GM18951 (cell line): ENCODE measurements at regions of chr6 and their contacts with region 1.

Region 1: DNA sequence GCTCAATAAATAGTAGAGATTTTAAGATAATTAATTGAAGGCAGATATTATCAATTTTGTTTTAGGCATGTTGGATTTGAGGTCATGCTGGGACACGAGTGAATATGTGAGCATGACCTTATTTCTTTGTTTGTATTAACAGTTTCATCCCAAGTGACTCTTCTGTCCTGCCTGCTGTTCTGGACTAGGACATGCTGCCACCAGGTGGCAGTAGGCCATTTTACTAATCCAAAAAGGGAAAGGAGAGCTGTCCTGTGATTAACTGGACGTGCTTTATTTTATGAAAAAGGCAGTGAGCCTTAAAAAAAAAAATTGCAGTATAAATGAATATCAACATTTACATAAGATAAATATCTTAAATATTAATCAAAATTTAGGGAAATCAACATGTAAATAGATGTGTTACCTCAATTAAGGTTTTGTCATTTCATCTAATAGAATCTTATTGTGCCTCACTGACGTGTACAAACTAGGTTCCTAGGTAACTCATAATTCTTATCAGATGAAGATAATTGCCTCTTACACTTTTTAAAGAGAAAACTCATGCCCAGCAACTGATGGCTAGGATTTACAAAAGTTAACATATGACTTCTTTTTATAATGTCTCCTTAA is 49.8 kb downstream of the FRK start:
- POLR2A ChIP-seq: no peak

Region 2: DNA sequence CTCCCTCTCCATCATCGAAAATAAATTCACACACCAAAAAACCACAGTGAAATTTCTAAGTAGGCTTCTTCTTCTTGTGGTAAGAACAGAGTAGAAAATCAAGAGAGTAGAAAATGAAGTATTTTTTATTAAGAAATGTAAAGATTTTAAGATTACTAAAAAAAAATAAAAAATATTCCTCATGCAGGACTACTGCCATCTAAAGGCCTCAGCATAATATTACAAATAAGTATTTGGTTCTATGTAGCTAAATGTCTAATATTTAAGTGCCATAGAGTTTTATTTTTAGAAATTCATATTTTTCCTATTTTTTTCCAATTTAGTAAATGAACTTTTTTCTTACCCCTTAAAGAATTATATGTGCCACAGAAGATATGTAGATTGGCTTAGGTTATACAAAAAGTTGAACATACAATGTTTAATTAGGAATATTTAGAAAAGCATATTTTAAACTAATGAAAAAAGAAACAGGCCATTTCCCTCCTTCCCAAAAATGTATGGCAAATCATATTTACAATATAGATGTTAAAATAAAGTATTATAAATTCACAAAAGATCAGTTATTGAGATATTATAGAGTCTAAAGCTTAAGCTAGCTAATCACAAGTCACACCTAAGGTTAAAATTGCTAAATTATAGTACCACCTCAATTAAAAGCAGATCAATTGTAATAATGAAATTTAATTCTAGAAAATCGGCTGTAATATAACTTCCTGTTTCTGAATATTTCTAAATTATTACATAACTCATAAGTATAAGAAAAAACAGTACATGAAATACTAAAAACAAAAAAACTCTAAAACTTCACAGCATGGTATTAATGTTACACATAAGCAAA is 86.3 kb after region 1 on chr6:
- in situ Hi-C with region 1: loop called (anchors 5 kb)
- POLR2A ChIP-seq: no peak

Region 3: GRCh38 chr6:116570856-116571682 is 560.2 kb after region 1 on chr6 and contains the start of gene RWDD1:
- in situ Hi-C with region 1: loop called (anchors 25 kb)
- POLR2A ChIP-seq: peak; percentile 89